A673 (cell line): ENCODE measurements at regions of chr6 and their contacts with region 1.

Region 1: GRCh38 chr6:53544470-53545308 is at the start of gene GCLC:
- DNase-seq: peak; percentile 97
- H3K4me3 ChIP-seq: peak within 1 kb of the TSS; percentile 74
- H3K27ac ChIP-seq: peak within 1 kb of the TSS; percentile 78
- H3K4me1 ChIP-seq: peaks cover 12% of the 10 kb centered on the region
- H3K27me3 ChIP-seq: no peaks in the 10 kb centered on the region
- CTCF ChIP-seq: peak; percentile 46
- total RNA-seq, gene GCLC: 33.2 and 33.5 TPM in 2 replicates

Region 2: GRCh38 chr6:53432318-53433161 is 112.1 kb before region 1 on chr6:
- CTCF ChIA-PET with region 1: no interaction called
- POLR2A ChIA-PET with region 1: no interaction called
- intact Hi-C with region 1: no loop called
- DNase-seq: no peak
- H3K4me3 ChIP-seq: no peak overlapping the region
- H3K27ac ChIP-seq: no peak overlapping the region
- H3K4me1 ChIP-seq: no peaks in the 10 kb centered on the region
- H3K27me3 ChIP-seq: no peaks in the 10 kb centered on the region
- CTCF ChIP-seq: no peak

Region 3: GRCh38 chr6:53461041-53461656 is 83.5 kb before region 1 on chr6:
- CTCF ChIA-PET with region 1: no interaction called
- POLR2A ChIA-PET with region 1: no interaction called
- intact Hi-C with region 1: no loop called
- DNase-seq: no peak
- H3K4me3 ChIP-seq: no peak overlapping the region
- H3K27ac ChIP-seq: no peak overlapping the region
- H3K4me1 ChIP-seq: no peaks in the 10 kb centered on the region
- H3K27me3 ChIP-seq: no peaks in the 10 kb centered on the region
- CTCF ChIP-seq: no peak

Region 4: DNA sequence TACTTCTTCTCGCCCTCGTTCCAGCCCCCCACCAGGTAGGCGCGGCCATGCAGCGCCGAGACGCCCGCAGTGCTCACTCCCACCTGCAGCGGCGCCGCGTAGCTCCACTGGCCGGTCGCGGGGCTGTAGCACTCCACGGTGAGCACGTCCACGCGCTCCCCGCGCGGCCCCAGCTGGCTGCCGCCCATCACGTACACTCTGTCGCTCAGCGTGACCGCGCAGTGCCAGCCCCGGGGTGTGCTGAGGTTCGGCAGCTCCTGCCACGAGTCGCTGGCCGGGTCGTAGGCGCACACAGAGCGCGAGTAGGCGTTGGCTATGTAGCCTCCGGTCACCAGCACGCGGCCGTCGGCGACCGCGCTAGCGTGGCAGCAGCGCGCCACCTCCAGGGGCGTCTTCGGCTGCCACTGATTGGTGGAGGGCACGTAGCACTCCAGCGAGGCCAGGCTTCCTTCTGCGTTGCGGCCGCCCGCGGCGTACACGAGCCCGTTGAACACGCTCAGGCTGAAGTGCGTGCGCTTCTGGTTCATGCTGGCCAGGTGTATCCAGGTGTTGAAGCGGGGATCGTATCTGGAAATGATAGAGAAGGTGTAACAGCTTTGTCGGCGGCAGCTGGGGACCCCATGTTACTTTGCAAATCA is 107.2 kb after region 1 on chr6:
- CTCF ChIA-PET with region 1: no interaction called
- POLR2A ChIA-PET with region 1: no interaction called
- intact Hi-C with region 1: loop called (anchors 1 kb)
- DNase-seq: peak; percentile 79
- H3K4me3 ChIP-seq: peak overlapping the region; percentile 48
- H3K27ac ChIP-seq: no peak overlapping the region
- H3K4me1 ChIP-seq: no peaks in the 10 kb centered on the region
- H3K27me3 ChIP-seq: peaks cover 21% of the 10 kb centered on the region
- CTCF ChIP-seq: peak; percentile 45

Region 5: DNA sequence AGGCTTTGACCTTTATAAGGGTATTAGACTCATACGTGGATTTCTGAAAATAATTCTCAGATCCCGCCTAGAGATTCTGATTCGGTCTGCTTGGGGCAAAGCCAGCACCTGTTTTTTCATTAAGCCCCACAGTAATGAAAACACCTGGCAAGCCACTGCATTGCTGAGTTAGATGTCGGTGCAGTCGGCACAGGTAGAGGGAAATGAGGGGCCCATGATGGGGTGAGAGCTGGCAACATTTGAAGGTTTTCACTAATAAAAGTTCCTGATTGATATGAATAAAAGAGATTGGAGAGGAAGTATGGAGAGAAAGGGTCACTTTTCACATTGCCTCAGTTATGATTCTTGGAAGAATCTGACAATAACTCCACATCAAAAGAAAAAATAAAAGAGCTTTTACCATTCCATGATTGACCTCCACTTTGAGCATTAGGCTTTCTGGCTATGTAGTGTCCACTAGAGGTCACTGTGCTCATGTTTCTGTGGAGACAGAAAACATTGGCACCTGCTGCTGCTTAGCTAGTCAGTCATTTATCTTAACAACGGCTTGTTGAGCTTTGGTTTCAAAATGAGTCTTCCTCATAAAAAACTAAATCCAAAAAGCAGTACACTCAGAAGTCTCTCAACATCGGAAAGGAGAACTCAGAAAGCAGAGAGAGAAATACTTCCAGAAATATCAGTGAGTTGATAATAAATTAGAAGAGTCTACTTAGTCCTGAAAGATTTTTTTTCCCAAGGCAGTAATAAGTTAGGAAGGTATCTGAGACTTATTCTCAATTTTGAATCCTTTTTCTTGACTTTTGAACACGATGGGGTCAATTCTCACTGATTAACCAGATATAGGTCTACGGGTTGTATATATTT is 174.1 kb after region 1 on chr6:
- CTCF ChIA-PET with region 1: no interaction called
- POLR2A ChIA-PET with region 1: no interaction called
- intact Hi-C with region 1: loop called (anchors 1 kb)
- DNase-seq: peak; percentile 73
- H3K4me3 ChIP-seq: no peak overlapping the region
- H3K27ac ChIP-seq: no peak overlapping the region
- H3K4me1 ChIP-seq: no peaks in the 10 kb centered on the region
- H3K27me3 ChIP-seq: peaks cover 24% of the 10 kb centered on the region
- CTCF ChIP-seq: peak; percentile 83

Region 6: GRCh38 chr6:53794720-53795253 is 250.1 kb after region 1 on chr6 and contains the start of gene LRRC1:
- CTCF ChIA-PET with region 1: no interaction called
- POLR2A ChIA-PET with region 1: no interaction called
- intact Hi-C with region 1: loop called (anchors 10 kb)
- DNase-seq: peak; percentile 92
- H3K4me3 ChIP-seq: peak within 1 kb of the TSS; percentile 74
- H3K27ac ChIP-seq: peak within 1 kb of the TSS; percentile 20
- H3K4me1 ChIP-seq: peaks cover 11% of the 10 kb centered on the region
- H3K27me3 ChIP-seq: peaks cover 35% of the 10 kb centered on the region
- CTCF ChIP-seq: no peak
- total RNA-seq, gene LRRC1: 3.9 and 4.4 TPM in 2 replicates